ENCODE measurements at regions of chr3 and their contacts with region 1.

Region 1: DNA sequence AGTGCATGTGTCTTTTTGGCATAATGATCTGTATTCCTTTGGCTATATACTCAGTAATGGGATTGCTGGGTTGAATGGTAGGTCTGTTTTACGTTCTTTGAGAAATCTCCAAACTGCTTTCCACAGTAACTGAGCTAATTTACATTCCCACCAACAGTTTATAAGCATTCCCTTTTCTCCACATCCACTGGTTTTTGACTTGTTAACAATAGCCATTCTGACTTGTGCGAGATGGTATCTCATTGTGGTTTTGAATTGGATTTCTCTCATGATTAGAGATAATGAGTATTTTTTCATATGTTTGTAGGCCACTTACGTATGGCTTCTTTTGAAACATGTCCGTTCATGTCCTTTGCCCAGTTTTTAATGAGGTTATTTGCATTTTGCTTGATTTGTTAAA is 117.7 kb downstream of the CHCHD4 start:
- DNase-seq: no peak
- ATAC-seq: no peak
- H3K4me3 ChIP-seq: no peak overlapping the region
- H3K27ac ChIP-seq: no peak overlapping the region
- H3K4me1 ChIP-seq: no peaks in the 10 kb centered on the region
- H3K27me3 ChIP-seq: peaks cover 10% of the 10 kb centered on the region; the same call in 1 of the 2 replicates
- CTCF ChIP-seq: no peak

Region 2: DNA sequence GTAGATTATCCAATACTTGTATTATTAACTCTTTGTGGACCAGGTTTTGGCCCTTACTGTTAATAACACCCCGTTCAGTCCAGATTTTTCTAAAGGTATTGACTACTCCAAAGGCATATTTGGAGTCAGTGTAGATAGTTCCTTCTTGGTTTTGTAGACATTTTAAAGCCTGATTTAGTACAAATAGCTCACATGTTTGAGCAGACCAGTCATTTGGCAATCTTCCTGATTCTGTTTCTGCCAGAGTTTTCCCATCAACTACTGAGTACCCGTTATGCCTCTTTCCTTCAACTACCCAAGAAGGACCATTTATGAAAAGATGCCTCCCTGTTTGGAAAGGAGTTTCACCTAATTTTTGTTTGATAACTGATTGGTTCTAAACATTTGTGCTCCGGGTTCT is 35.7 kb after region 1 on chr3:
- CTCF ChIA-PET with region 1: no interaction called
- POLR2A ChIA-PET with region 1: interaction called, 8 read pairs
- intact Hi-C with region 1: loop called (anchors 1 kb)
- DNase-seq: peak; percentile 48
- ATAC-seq: no peak
- H3K4me3 ChIP-seq: no peak overlapping the region
- H3K27ac ChIP-seq: no peak overlapping the region
- H3K4me1 ChIP-seq: no peaks in the 10 kb centered on the region
- H3K27me3 ChIP-seq: peaks cover 29% of the 10 kb centered on the region
- CTCF ChIP-seq: no peak

Measured in PC-3 (cell line).